HAP-1 (cell line): ENCODE measurements at regions of chr10 and their contacts with region 1.

Region 1: GRCh38 chr10:101042667-101043355 is 11.8 kb downstream of the SFXN3 start:
- DNase-seq: peak; percentile 96 to 99
- H3K4me3 ChIP-seq: peak overlapping the region; percentile 40
- H3K4me1 ChIP-seq: peaks cover 13% of the 10 kb centered on the region
- H3K27me3 ChIP-seq: no peaks in the 10 kb centered on the region

Region 2: GRCh38 chr10:100858747-100859483 is 183.9 kb before region 1 on chr10:
- in situ Hi-C with region 1: no loop called
- DNase-seq: no peak
- H3K4me3 ChIP-seq: no peak overlapping the region
- H3K4me1 ChIP-seq: no peaks in the 10 kb centered on the region
- H3K27me3 ChIP-seq: peaks cover 43% of the 10 kb centered on the region

Region 3: DNA sequence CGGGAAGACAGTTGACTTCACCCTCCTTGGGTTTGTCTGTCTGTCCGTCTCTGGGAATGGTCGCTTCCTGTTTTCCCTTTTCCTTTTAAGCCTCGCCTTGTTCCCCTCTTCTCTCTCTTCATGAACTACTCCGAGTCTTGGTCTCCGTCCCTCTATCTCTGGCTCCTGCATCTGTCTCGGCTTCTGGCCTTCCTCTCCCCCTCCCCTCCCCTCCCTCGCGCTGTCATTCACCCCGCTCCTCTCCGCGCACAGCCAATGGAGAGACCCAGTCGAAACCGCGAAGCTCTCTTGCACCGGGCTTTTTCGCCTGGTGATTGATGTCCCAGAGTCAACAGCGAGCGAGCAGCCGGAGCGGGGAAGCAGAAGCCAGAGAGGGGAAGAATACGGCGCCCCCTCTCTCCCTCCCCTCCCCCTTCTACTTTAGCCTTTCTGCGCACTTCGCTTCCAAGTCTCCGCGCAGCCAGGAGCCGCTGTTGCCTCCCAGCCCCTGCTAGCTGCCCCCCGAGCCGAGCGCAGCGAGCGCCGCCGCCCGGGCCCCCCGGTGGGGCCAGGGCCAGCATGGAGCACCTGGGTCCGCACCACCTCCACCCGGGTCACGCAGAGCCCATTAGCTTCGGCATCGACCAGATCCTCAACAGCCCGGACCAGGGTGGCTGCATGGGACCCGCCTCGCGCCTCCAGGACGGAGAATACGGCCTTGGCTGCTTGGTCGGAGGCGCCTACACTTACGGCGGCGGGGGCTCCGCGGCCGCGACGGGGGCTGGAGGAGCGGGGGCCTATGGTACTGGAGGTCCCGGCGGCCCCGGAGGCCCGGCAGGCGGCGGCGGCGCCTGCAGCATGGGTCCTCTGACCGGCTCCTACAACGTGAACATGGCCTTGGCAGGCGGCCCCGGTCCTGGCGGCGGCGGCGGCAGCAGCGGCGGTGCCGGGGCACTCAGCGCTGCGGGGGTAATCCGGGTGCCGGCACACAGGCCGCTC is 88.5 kb after region 1 on chr10 and contains the start of gene TLX1:
- in situ Hi-C with region 1: loop called (anchors 5 kb)
- DNase-seq: peak; percentile 81 to 89
- H3K4me3 ChIP-seq: peak within 1 kb of the TSS; percentile 54
- H3K4me1 ChIP-seq: peaks cover 6% of the 10 kb centered on the region; the same call in 1 of the 2 replicates
- H3K27me3 ChIP-seq: no peaks in the 10 kb centered on the region

Region 4: DNA sequence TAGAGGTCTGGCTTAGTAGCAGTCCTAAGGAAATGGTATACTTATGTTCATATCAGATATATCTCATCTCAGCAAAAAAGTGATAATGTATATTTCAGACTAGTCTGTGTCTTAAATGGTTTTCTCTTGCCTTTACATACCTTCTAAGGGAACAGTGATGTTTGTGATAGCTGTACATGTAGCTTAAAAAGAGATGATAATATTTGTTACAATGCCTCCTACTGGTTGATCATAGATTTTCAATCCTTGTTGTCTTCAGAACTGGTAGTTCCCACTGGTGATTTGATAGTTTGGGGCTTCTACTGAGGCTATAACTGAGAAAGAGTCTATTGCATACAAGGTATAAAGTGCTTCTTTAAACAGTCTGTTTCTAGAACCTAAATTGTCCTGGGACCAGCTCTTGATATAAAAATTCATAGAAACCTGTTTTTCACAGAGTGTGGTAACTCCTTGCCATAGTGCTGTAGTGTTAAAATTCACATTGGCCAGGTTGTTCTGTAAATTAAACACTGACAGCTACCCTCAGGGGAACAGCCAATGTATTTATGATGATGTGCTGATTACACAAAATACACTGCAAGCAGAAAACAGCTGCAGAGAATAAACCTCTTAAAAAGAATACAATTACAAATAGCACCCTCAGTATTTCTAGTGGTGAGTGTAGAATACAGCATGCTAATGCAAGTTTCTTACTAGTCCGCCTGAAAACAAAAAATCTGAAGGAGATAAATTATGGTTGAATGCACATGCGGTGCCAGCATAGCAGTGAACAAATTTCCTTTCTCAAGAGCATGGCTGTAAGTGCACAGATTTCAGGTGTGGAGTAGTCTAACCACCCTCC is 401.5 kb after region 1 on chr10:
- in situ Hi-C with region 1: no loop called
- DNase-seq: no peak
- H3K4me3 ChIP-seq: no peak overlapping the region
- H3K4me1 ChIP-seq: peaks cover 3% of the 10 kb centered on the region; the same call in 1 of the 2 replicates
- H3K27me3 ChIP-seq: no peaks in the 10 kb centered on the region